ENCODE measurements at regions of chr5 and their contacts with region 1.

Region 1: GRCh38 chr5:111929867-111930266 is 172.9 kb upstream of the NREP start:
- DNase-seq: no peak
- H3K4me3 ChIP-seq: no peak overlapping the region
- CTCF ChIP-seq: no peak

Region 2: GRCh38 chr5:111948092-111948841 is 18.4 kb after region 1 on chr5:
- CTCF ChIA-PET with region 1: interaction called, 7 read pairs
- POLR2A ChIA-PET with region 1: interaction called, 15 read pairs
- DNase-seq: peak; percentile 95
- H3K4me3 ChIP-seq: no peak overlapping the region
- CTCF ChIP-seq: no peak

Region 3: GRCh38 chr5:111997711-111998110 is 67.8 kb after region 1 on chr5:
- CTCF ChIA-PET with region 1: no interaction called
- POLR2A ChIA-PET with region 1: interaction called, 13 read pairs
- DNase-seq: peak; percentile 100
- H3K4me3 ChIP-seq: no peak overlapping the region
- CTCF ChIP-seq: no peak

Region 4: GRCh38 chr5:112025757-112026156 is 95.9 kb after region 1 on chr5:
- CTCF ChIA-PET with region 1: no interaction called
- POLR2A ChIA-PET with region 1: no interaction called
- DNase-seq: no peak
- H3K4me3 ChIP-seq: no peak overlapping the region
- CTCF ChIP-seq: no peak

Region 5: DNA sequence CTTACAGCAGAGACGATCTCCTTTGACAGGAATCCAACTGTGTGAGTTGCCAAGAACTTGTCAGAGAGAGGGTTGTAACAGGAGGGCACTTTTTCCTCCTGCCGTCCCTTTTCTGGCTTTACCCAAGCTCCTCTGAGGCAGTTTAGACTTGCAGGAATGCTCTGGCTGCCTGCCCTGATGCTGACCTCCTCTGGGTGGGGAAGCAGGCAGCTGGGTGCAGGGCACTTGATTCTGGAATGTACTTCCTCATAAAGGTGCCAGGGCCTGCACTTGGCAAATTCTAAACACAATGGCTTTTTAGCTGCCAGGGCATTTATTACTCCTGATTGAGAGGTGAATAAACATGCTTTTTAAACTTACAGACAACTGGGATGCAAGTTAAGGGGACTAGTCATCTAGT is 298.8 kb after region 1 on chr5:
- CTCF ChIA-PET with region 1: no interaction called
- POLR2A ChIA-PET with region 1: no interaction called
- DNase-seq: peak; percentile 3
- H3K4me3 ChIP-seq: no peak overlapping the region
- CTCF ChIP-seq: no peak